Dorsolateral prefrontal cortex (tissue), 120 donors: ENCODE measurements at regions of chr21 and their contacts with region 1.

Region 1: DNA sequence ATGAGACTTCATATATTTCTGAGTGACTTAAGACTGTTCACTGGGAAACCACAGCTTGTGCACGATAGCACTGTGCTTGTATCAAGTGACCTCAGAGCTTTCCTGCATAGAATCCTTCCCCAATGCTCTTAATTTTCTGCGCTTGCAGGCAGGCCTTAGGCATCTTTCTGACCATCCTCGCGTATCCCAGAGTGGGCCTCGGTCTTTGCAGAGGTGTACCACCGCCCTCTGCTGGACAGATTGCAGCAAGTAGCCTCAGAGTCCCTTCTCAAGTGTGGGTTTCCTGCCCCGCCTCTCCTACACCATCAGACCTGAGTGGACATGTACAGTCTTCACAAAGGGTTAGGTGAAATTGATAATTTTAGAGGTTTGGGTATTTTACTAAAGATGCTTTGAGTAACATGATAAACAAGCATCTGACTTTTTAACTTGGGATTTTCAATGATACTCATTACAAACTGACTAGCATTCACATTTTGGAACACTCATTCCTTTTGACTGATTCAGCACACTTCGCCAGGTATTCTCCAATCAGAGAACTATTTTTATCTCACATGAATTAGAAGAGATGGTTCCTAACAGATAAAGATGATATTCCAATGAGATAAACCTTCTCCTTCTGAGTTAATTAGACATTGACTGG is 246.5 kb upstream of the USP25 start:
- DNase-seq: peak; percentile 80 to 95 (median 90)
- H3K4me3 ChIP-seq: no peak overlapping the region
- H3K27ac ChIP-seq: peak overlapping the region in 13 of 59 donors; percentile 3 to 78 (median 37)
- H3K27me3 ChIP-seq: no peaks in the 10 kb centered on the region
- CTCF ChIP-seq: peak; percentile 73 to 99 (median 95)

Region 2: GRCh38 chr21:14403681-14404318 is 1079.5 kb before region 1 on chr21:
- intact Hi-C with region 1: loop called (anchors 10 kb)
- DNase-seq: no peak
- H3K4me3 ChIP-seq: no peak overlapping the region
- H3K27ac ChIP-seq: no peak overlapping the region
- H3K27me3 ChIP-seq: no peaks in the 10 kb centered on the region
- CTCF ChIP-seq: peak; percentile 30 to 79 (median 60)

Region 3: DNA sequence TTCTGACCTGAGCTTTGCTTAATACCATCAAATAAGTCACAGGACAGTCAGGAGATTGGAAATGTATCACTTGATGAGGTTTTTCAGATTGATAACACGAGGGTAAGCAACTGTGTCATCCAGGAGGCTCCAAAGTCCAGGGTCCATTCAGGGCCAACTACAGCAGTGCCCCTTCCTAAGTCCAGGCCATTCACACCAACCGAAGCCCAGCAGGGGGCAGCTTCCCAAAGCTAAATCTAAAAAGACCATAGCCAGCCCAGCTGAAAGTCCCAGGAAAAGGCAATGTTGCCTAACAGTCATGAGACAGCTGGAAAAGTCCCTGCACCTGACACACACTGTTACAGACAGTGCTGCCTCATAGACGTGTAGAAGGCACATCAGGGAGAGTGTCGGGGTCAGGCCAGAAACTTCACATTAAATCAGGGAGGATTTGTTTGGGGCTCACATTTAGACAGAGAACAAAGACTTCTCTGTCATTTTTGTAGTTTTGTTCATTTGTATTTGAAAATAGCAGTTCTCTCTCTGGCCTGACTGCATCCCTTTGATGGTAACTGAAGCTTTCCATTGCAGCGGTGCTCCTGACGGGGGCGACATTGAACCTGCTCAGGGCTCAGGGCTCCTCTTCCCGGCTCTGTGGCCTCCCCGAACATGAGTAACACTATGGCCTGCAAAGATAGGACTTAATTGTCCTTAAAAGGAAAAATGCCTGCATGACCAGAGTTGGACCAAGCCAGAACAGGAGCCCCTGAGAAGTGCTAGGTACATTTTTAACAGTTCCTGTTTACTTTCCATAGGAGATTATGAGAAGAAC is 618.8 kb before region 1 on chr21:
- intact Hi-C with region 1: loop called (anchors 2 to 5 kb)
- DNase-seq: peak; percentile 60 to 86 (median 80)
- H3K4me3 ChIP-seq: peak overlapping the region in 4 of 59 donors; percentile 5 to 32 (median 18)
- H3K27ac ChIP-seq: peak overlapping the region in 57 of 59 donors; percentile 20 to 91 (median 76)
- H3K27me3 ChIP-seq: no peaks in the 10 kb centered on the region
- CTCF ChIP-seq: peak in 54 of 56 donors; percentile 37 to 85 (median 68)

Region 4: DNA sequence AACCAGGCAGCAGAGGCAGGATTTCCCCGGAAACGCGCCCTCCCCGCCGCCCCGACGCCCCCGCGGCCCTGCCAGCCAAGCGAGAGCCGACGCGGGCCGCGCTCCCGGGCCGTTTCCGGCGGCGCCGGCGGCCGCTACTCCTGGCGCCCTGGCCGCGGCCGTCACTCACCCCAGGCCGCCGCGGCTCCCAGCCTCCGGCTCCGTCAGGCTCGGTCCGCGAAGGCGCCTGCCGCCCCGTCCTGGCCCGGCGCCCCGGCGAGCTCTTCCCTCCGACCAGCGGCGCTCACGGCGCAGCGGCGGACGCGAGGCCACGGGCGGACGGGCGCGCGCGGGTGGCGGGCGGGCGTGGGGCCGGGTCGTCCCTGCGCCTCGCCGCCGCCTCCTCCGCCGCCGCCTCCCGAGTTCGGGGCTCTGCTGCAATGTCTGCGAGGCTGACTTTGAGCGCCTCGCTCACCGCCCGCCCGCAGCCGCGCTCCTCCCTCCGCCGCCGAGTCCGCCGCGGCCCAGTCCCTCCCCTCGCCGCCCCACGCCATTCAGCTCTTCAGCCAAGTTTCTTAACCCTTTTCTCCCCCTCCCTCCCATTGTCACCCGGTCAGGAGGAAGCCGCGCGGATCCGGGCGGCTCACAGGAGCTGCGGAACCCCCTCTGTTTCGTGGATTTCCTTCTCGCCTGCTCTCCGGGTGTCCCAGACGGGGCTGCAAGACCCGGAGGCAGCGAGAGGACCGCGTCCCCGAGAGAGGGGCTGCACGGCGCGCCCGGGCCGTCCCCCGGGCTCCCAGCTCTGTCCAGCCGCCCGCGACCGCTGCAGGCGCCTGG is 418.5 kb before region 1 on chr21 and contains the start of gene NRIP1:
- intact Hi-C with region 1: loop called (anchors 5 to 10 kb)
- DNase-seq: peak; percentile 73 to 92 (median 86)
- H3K4me3 ChIP-seq: peak within 1 kb of the TSS; percentile 62 to 97 (median 89)
- H3K27ac ChIP-seq: peak within 1 kb of the TSS; percentile 71 to 98 (median 94)
- H3K27me3 ChIP-seq: no peaks in the 10 kb centered on the region
- CTCF ChIP-seq: peak in 3 of 56 donors; percentile 14 to 31 (median 15)
- total RNA-seq, gene NRIP1: 24.3 to 54.6 (median 39.1) TPM

Region 5: DNA sequence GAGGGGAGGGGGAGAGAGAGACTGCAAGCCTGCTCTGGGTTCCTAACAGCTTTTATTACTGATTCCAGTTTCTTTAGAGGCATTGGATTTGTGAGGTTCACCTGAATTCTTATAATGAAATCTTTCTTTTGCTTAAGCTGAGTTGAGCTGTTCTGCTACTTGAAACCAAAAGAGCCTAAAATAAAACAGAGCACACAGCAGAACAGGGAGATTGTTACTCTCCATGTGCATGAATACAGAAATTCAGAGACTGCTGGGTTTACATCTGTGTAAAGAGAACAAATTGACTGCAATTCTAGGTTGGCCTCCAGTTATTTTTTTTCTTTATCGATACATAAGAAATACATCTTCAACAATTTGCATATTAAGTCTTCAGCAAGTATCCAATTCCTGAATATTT is 249.6 kb before region 1 on chr21:
- intact Hi-C with region 1: no loop called
- DNase-seq: no peak
- H3K4me3 ChIP-seq: no peak overlapping the region
- H3K27ac ChIP-seq: no peak overlapping the region
- H3K27me3 ChIP-seq: no peaks in the 10 kb centered on the region
- CTCF ChIP-seq: no peak

Region 6: DNA sequence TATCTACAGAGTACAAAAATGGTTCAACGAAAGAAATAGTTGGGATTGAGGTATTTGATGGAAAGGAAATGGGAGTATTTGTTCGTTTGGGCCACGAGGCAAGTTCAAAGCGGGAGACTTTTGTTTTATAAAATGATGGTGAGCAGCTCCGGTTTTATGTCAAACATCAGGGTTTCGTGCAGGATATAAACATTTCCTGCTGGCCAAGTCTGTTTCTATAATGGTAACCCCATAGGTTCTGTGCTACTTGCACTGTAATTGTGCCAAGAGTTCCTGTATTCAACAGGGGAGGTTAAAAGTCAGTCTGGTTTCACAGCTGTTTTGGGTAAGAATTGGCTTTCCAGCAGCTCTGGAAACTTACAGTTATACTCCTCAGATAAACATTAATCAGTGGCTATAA is 128.2 kb before region 1 on chr21:
- intact Hi-C with region 1: no loop called
- DNase-seq: no peak
- H3K4me3 ChIP-seq: no peak overlapping the region
- H3K27ac ChIP-seq: no peak overlapping the region
- H3K27me3 ChIP-seq: no peaks in the 10 kb centered on the region
- CTCF ChIP-seq: no peak